GM12878 (cell line): ENCODE measurements at regions of chr5 and their contacts with region 1.

Region 1: GRCh38 chr5:95870105-95870672 is 47.7 kb upstream of the GLRX start:
- DNase-seq: peak; percentile 65
- ATAC-seq: peak; percentile 84
- H3K4me3 ChIP-seq: peak overlapping the region; percentile 54; the same call in 1 of the 2 replicates
- H3K27ac ChIP-seq: peak overlapping the region; percentile 82
- H3K4me1 ChIP-seq: peaks cover 24% of the 10 kb centered on the region
- H3K27me3 ChIP-seq: no peaks in the 10 kb centered on the region
- CTCF ChIP-seq: no peak
- EP300 ChIP-seq: no peak; a peak in 1 of 4 replicates
- POLR2A ChIP-seq: 0 out of 2 replicates have a peak, but pooled peaks have one; percentile 32
- RAD21 ChIP-seq: no peak

Region 2: GRCh38 chr5:95581576-95581975 is 288.6 kb before region 1 on chr5:
- CTCF ChIA-PET with region 1: no interaction called
- POLR2A ChIA-PET with region 1: no interaction called
- RAD21 ChIA-PET with region 1: no interaction called
- SMC1A ChIA-PET with region 1: no interaction called
- in situ Hi-C with region 1: no loop called
- intact Hi-C with region 1: no loop called
- DNase-seq: no peak
- ATAC-seq: no peak
- H3K4me3 ChIP-seq: no peak overlapping the region
- H3K27ac ChIP-seq: no peak overlapping the region
- H3K4me1 ChIP-seq: no peaks in the 10 kb centered on the region
- H3K27me3 ChIP-seq: no peaks in the 10 kb centered on the region
- CTCF ChIP-seq: no peak
- EP300 ChIP-seq: no peak
- POLR2A ChIP-seq: no peak
- RAD21 ChIP-seq: no peak

Region 3: DNA sequence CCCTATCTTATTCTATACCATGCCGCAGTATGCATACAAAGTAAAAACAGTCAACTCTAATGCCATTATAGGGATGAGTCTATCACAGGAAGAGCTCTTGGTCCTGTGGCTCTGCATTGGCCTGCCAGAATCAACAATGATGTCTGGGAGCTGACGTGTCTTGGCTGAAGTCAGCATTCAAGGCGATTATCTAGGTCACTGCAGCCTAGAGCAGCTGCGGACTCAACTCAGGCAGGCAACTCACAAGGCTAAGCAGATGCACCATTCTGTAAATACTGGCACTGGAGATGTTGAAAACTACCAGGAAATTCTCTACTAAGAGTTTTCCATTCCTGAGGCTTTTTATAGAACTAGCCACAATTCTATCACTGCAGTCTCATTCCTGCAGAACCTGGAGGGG is 200.6 kb before region 1 on chr5:
- CTCF ChIA-PET with region 1: no interaction called
- POLR2A ChIA-PET with region 1: no interaction called
- RAD21 ChIA-PET with region 1: no interaction called
- SMC1A ChIA-PET with region 1: no interaction called
- in situ Hi-C with region 1: no loop called
- intact Hi-C with region 1: no loop called
- DNase-seq: no peak
- ATAC-seq: no peak
- H3K4me3 ChIP-seq: no peak overlapping the region
- H3K27ac ChIP-seq: no peak overlapping the region
- H3K4me1 ChIP-seq: no peaks in the 10 kb centered on the region
- H3K27me3 ChIP-seq: no peaks in the 10 kb centered on the region
- CTCF ChIP-seq: no peak
- EP300 ChIP-seq: no peak
- POLR2A ChIP-seq: no peak
- RAD21 ChIP-seq: no peak

Region 4: GRCh38 chr5:95858661-95859326 is 11.4 kb before region 1 on chr5:
- CTCF ChIA-PET with region 1: interaction called, 19 read pairs
- POLR2A ChIA-PET with region 1: interaction called, 13 read pairs
- RAD21 ChIA-PET with region 1: interaction called, 18 read pairs
- SMC1A ChIA-PET with region 1: interaction called, 57 read pairs
- in situ Hi-C with region 1: no loop called
- intact Hi-C with region 1: no loop called
- DNase-seq: peak; percentile 67
- ATAC-seq: peak; percentile 95
- H3K4me3 ChIP-seq: no peak overlapping the region; the same call in 1 of the 2 replicates
- H3K27ac ChIP-seq: no peak overlapping the region
- H3K4me1 ChIP-seq: peaks cover 21% of the 10 kb centered on the region
- H3K27me3 ChIP-seq: no peaks in the 10 kb centered on the region
- CTCF ChIP-seq: peak; percentile 96 to 99 (median 98)
- EP300 ChIP-seq: no peak
- POLR2A ChIP-seq: no peak
- RAD21 ChIP-seq: peak; percentile 99

Region 5: GRCh38 chr5:95892780-95893354 is 22.7 kb after region 1 on chr5:
- CTCF ChIA-PET with region 1: interaction called, 6 read pairs
- POLR2A ChIA-PET with region 1: no interaction called
- RAD21 ChIA-PET with region 1: interaction called, 12 read pairs
- SMC1A ChIA-PET with region 1: interaction called, 6 read pairs
- in situ Hi-C with region 1: no loop called
- intact Hi-C with region 1: no loop called
- DNase-seq: no peak
- ATAC-seq: peak; percentile 94
- H3K4me3 ChIP-seq: no peak overlapping the region
- H3K27ac ChIP-seq: no peak overlapping the region
- H3K4me1 ChIP-seq: no peaks in the 10 kb centered on the region
- H3K27me3 ChIP-seq: no peaks in the 10 kb centered on the region
- CTCF ChIP-seq: peak; percentile 57 to 62 (median 57)
- EP300 ChIP-seq: no peak
- POLR2A ChIP-seq: no peak
- RAD21 ChIP-seq: peak; percentile 81

Region 6: DNA sequence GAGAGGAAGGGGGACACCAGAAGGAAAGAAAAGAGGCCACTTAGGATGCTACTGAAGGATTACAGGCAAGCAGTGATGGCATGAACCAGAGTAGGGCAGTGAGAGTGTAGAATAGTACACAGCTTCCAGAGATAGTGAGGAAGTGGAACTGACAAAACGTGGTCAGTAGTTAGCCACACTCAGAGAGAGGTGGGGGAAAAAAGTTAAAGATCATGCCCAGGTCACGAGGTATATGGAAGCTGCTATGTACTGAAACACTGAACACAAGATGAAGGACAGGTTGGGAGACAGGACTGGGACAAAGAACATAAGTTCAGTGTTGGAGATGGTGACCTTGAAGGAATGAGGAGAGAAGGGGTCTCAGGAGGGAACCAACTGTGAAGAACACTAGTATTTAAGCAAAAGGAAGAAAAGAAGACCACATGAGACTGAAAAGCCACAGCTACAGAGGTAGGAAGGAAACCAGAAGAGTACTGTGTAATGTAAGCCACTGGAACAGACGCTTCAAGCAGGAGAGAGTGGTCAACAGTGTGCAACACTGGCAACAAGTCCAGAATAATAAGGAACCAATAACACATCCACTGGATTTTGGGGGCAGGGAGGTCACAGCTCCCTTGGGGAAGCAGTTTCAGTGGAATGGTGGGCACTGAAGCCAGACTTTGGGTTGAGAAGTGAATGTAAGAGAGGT is 46.0 kb after region 1 on chr5:
- CTCF ChIA-PET with region 1: interaction called, 4 read pairs
- POLR2A ChIA-PET with region 1: interaction called, 8 read pairs
- RAD21 ChIA-PET with region 1: interaction called, 27 read pairs
- SMC1A ChIA-PET with region 1: interaction called, 6 read pairs
- in situ Hi-C with region 1: no loop called
- intact Hi-C with region 1: no loop called
- DNase-seq: no peak
- ATAC-seq: peak; percentile 79
- H3K4me3 ChIP-seq: no peak overlapping the region
- H3K27ac ChIP-seq: peak overlapping the region; percentile 20; the same call in 1 of the 2 replicates
- H3K4me1 ChIP-seq: peaks cover 38% of the 10 kb centered on the region
- H3K27me3 ChIP-seq: no peaks in the 10 kb centered on the region
- CTCF ChIP-seq: no peak
- EP300 ChIP-seq: no peak
- POLR2A ChIP-seq: no peak
- RAD21 ChIP-seq: no peak

Region 7: DNA sequence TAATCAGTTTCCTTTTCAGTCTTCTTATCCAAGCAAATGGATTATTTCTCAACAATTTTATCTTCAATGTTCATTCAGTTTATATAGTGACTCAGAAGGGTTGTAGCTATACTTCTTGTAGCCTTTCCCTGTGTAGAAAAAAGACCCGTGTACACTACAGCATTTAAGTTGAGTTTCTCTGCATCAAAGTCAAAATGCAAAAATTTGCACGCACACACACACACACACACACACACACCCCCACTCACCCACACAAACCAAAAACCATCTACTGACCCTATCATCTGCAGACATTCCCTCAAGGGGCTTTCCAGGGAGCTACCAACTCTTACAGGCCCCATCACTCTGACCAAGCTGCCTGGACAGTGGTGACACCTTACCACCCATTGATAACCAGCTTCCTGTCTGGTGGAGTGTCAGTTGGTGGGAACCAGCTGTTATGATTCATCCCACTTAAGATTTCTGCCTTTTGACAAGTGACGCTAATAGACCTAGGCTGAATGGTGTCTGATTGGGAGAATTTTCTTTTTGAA is 103.7 kb after region 1 on chr5:
- CTCF ChIA-PET with region 1: no interaction called
- POLR2A ChIA-PET with region 1: interaction called, 7 read pairs
- RAD21 ChIA-PET with region 1: interaction called, 7 read pairs
- SMC1A ChIA-PET with region 1: interaction called, 16 read pairs
- in situ Hi-C with region 1: no loop called
- intact Hi-C with region 1: no loop called
- DNase-seq: peak; percentile 87
- ATAC-seq: peak; percentile 99
- H3K4me3 ChIP-seq: no peak overlapping the region
- H3K27ac ChIP-seq: no peak overlapping the region; the same call in 1 of the 2 replicates
- H3K4me1 ChIP-seq: peaks cover 10% of the 10 kb centered on the region
- H3K27me3 ChIP-seq: no peaks in the 10 kb centered on the region
- CTCF ChIP-seq: no peak
- EP300 ChIP-seq: peak; percentile 52 to 71; a peak in 3 of 4 replicates
- POLR2A ChIP-seq: no peak
- RAD21 ChIP-seq: no peak

Region 8: GRCh38 chr5:96026406-96027041 is 156.3 kb after region 1 on chr5:
- CTCF ChIA-PET with region 1: no interaction called
- POLR2A ChIA-PET with region 1: no interaction called
- RAD21 ChIA-PET with region 1: no interaction called
- SMC1A ChIA-PET with region 1: no interaction called
- in situ Hi-C with region 1: no loop called
- intact Hi-C with region 1: no loop called
- DNase-seq: no peak
- ATAC-seq: no peak
- H3K4me3 ChIP-seq: no peak overlapping the region
- H3K27ac ChIP-seq: no peak overlapping the region
- H3K4me1 ChIP-seq: no peaks in the 10 kb centered on the region
- H3K27me3 ChIP-seq: no peaks in the 10 kb centered on the region
- CTCF ChIP-seq: no peak
- EP300 ChIP-seq: no peak
- POLR2A ChIP-seq: no peak
- RAD21 ChIP-seq: no peak